Panc1 (cell line): ENCODE measurements at regions of chr10 and their contacts with region 1.

Region 1: DNA sequence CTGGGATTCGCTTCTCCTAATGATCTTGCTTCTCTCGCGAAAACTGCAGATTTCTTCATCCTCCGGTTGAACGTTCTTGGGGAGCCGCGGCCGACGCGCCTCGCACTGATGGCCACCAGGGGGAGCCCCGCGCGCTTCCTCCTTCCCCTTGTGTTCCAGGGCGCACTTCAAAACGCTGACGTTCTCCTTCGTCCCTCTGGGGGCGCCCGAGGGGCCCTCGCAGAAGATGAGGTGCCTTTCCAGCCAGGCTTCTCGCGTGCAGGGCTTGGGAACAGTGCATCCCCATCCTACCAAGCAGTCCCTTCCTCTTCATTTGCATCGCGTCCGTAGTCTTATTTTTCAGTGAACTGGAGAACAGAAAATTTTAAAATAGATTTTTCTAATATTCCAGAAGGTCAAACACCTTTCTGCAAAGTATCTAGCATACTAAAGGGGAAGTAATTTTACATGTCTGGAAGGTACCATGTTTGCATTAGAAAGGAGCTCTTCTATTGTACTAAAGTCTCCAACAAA is 22.5 kb downstream of the GSTO2 start:
- DNase-seq: no peak
- ATAC-seq: peak; percentile 97
- H3K4me3 ChIP-seq: no peak overlapping the region
- H3K27ac ChIP-seq: no peak overlapping the region
- H3K4me1 ChIP-seq: peaks cover 6% of the 10 kb centered on the region
- H3K27me3 ChIP-seq: no peaks in the 10 kb centered on the region
- CTCF ChIP-seq: peak; percentile 100

Region 2: GRCh38 chr10:104274762-104275721 is 16.5 kb before region 1 on chr10:
- CTCF ChIA-PET with region 1: interaction called, 14 read pairs
- POLR2A ChIA-PET with region 1: no interaction called
- in situ Hi-C with region 1: no loop called
- intact Hi-C with region 1: no loop called
- DNase-seq: no peak
- ATAC-seq: peak; percentile 97
- H3K4me3 ChIP-seq: peak overlapping the region; percentile 61 to 82
- H3K27ac ChIP-seq: peak overlapping the region; percentile 87
- H3K4me1 ChIP-seq: peaks cover 9% of the 10 kb centered on the region
- H3K27me3 ChIP-seq: no peaks in the 10 kb centered on the region
- CTCF ChIP-seq: peak; percentile 100

Region 3: DNA sequence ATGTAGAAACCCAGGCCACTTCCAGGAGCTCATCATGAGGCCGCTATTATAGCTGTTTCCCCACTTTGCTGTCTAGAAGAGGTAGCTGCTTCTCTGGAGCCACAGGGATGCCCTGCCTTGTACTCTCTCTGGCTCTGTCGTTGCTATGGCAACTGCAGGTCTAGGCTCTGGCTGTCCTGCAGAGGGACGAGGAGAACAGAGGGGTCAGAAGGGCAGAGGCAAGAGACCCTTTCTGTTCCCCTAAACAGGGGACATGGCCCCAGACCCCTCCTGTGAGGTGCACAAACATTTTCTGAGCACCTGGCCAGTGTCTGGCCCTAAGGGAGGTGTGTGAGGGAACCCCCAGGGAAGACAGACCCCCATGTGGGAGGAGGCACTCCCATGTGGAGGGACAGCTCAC is 15.4 kb after region 1 on chr10:
- CTCF ChIA-PET with region 1: interaction called, 21 read pairs
- POLR2A ChIA-PET with region 1: no interaction called
- in situ Hi-C with region 1: no loop called
- intact Hi-C with region 1: no loop called
- DNase-seq: no peak
- ATAC-seq: peak; percentile 23
- H3K4me3 ChIP-seq: no peak overlapping the region
- H3K27ac ChIP-seq: peak overlapping the region; percentile 5; the same call in 1 of the 2 replicates
- H3K4me1 ChIP-seq: peaks cover 49% of the 10 kb centered on the region
- H3K27me3 ChIP-seq: no peaks in the 10 kb centered on the region
- CTCF ChIP-seq: no peak

Region 4: DNA sequence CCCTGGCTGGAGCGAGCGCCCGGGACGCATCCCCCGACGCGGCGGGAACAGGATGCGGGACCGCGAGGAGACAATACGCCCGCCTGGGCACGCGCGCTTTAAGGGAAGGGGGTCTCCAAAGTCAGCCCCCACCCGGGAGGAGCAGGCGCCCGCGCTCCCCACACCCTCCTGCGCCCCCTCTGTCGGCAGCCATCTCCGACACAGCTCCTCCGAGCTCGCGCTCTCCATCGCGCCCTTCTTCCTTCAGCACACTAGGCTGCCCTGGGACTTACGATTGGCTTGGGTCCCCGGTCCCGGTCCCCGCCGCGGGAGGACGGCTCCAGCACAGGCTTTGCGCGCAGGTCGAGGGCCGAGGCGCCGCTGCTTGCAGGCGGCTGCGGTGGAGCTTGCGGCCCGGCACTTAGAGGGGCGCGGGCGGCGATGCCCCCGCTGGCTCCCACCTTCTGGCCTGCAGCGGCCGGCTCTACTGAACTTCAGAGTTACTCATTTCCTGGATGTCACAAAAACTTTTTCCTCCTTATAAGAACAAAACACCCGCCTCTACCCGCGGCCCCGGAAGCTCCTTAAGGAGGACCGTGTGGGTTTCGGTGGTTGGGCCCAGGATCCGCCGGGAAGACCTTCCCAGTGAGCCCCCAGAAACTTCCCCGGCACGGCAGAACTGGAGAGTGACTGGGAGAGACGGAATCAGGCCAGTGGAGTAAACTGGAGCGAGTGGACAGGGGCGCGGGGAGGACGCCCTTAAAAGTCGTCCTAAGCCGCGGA is 46.7 kb after region 1 on chr10 and contains the start of gene ITPRIP:
- CTCF ChIA-PET with region 1: interaction called, 11 read pairs
- POLR2A ChIA-PET with region 1: interaction called, 3 read pairs
- in situ Hi-C with region 1: no loop called
- intact Hi-C with region 1: no loop called
- DNase-seq: no peak
- ATAC-seq: peak; percentile 78
- H3K4me3 ChIP-seq: peak within 1 kb of the TSS; percentile 83 to 86
- H3K27ac ChIP-seq: peak within 1 kb of the TSS; percentile 99
- H3K4me1 ChIP-seq: peaks cover 59% of the 10 kb centered on the region
- H3K27me3 ChIP-seq: no peaks in the 10 kb centered on the region
- CTCF ChIP-seq: peak; percentile 45; the same call in 1 of the 2 replicates
- total RNA-seq, gene ITPRIP: 55.0 TPM

Region 5: GRCh38 chr10:104353325-104354048 is 62.0 kb after region 1 on chr10 and contains the start of gene CFAP58:
- CTCF ChIA-PET with region 1: interaction called, 8 read pairs
- POLR2A ChIA-PET with region 1: interaction called, 18 read pairs
- in situ Hi-C with region 1: no loop called
- intact Hi-C with region 1: loop called (anchors 1 kb)
- DNase-seq: peak; percentile 89
- ATAC-seq: peak; percentile 98
- H3K4me3 ChIP-seq: peak within 1 kb of the TSS; percentile 62 to 96
- H3K27ac ChIP-seq: peak within 1 kb of the TSS; percentile 37
- H3K4me1 ChIP-seq: peaks cover 20% of the 10 kb centered on the region
- H3K27me3 ChIP-seq: no peaks in the 10 kb centered on the region
- CTCF ChIP-seq: peak; percentile 91
- total RNA-seq, gene CFAP58: 2.0 TPM